GM12878 (cell line): ENCODE measurements at regions of chrX and their contacts with region 1.

Region 1: DNA sequence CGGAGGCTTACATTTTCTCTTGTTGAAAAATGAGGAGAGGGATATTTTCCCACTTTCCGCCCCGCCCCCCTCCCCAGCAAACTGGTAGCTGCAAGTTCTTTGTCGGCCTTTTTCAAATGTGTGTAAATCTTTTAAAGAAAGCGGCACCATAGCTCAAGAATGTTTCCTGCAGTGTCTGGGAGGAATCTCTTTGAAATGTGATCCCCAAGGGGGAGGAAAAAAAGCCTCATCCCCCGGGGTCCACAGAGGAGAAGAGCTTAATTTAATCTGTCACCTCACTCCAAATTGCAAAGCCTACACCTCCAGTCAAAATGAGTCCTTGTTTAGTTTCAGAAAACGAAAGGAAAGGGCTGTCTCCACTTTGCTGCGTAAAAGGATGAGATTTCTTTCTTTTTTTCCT is 34.8 kb downstream of the ASMT start:
- DNase-seq: no peak
- ATAC-seq: no peak
- H3K4me3 ChIP-seq: no peak overlapping the region
- H3K27ac ChIP-seq: no peak overlapping the region
- H3K4me1 ChIP-seq: no peaks in the 10 kb centered on the region
- H3K27me3 ChIP-seq: no peaks in the 10 kb centered on the region
- CTCF ChIP-seq: no peak
- EP300 ChIP-seq: no peak
- POLR2A ChIP-seq: no peak
- RAD21 ChIP-seq: no peak

Region 2: GRCh38 chrX:1462596-1463251 is 186.9 kb before region 1 on chrX:
- CTCF ChIA-PET with region 1: no interaction called
- POLR2A ChIA-PET with region 1: no interaction called
- RAD21 ChIA-PET with region 1: no interaction called
- SMC1A ChIA-PET with region 1: no interaction called
- in situ Hi-C with region 1: loop called (anchors 5 kb)
- intact Hi-C with region 1: no loop called
- DNase-seq: no peak
- ATAC-seq: no peak
- H3K4me3 ChIP-seq: no peak overlapping the region
- H3K27ac ChIP-seq: no peak overlapping the region
- H3K4me1 ChIP-seq: peaks cover 10% of the 10 kb centered on the region
- H3K27me3 ChIP-seq: no peaks in the 10 kb centered on the region
- CTCF ChIP-seq: no peak
- EP300 ChIP-seq: no peak
- POLR2A ChIP-seq: no peak
- RAD21 ChIP-seq: no peak

Region 3: DNA sequence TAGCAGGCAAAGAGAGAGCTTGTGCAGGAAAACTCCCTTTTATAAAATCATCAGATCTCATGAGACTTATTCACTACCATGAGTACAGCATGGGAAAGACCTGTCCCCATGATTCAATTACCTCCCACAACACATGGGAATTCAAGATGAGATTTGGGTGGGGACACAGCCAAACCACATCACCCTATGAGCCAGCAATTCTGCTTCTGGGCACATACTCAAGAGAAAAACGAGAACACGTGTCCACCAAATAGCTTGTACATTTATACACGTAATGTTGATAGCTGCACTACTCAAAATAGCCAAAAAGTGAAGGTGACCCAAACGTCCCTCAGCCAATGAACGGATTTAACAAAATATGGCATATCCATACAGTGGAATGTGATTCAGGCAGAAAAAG is 945.6 kb after region 1 on chrX:
- CTCF ChIA-PET with region 1: no interaction called
- POLR2A ChIA-PET with region 1: no interaction called
- RAD21 ChIA-PET with region 1: no interaction called
- SMC1A ChIA-PET with region 1: no interaction called
- in situ Hi-C with region 1: no loop called
- intact Hi-C with region 1: loop called (anchors 1 kb)
- DNase-seq: no peak
- ATAC-seq: no peak
- H3K4me3 ChIP-seq: no peak overlapping the region
- H3K27ac ChIP-seq: no peak overlapping the region
- H3K4me1 ChIP-seq: no peaks in the 10 kb centered on the region
- H3K27me3 ChIP-seq: no peaks in the 10 kb centered on the region
- CTCF ChIP-seq: no peak
- EP300 ChIP-seq: no peak
- POLR2A ChIP-seq: no peak
- RAD21 ChIP-seq: no peak

Region 4: GRCh38 chrX:2811271-2811670 is 1161.7 kb after region 1 on chrX:
- CTCF ChIA-PET with region 1: no interaction called
- POLR2A ChIA-PET with region 1: no interaction called
- RAD21 ChIA-PET with region 1: no interaction called
- SMC1A ChIA-PET with region 1: no interaction called
- in situ Hi-C with region 1: loop called (anchors 5 kb)
- intact Hi-C with region 1: loop called (anchors 10 kb)
- DNase-seq: no peak
- ATAC-seq: no peak
- H3K4me3 ChIP-seq: no peak overlapping the region
- H3K27ac ChIP-seq: no peak overlapping the region
- H3K4me1 ChIP-seq: no peaks in the 10 kb centered on the region
- H3K27me3 ChIP-seq: no peaks in the 10 kb centered on the region
- CTCF ChIP-seq: no peak
- EP300 ChIP-seq: no peak
- POLR2A ChIP-seq: no peak
- RAD21 ChIP-seq: no peak

Region 5: DNA sequence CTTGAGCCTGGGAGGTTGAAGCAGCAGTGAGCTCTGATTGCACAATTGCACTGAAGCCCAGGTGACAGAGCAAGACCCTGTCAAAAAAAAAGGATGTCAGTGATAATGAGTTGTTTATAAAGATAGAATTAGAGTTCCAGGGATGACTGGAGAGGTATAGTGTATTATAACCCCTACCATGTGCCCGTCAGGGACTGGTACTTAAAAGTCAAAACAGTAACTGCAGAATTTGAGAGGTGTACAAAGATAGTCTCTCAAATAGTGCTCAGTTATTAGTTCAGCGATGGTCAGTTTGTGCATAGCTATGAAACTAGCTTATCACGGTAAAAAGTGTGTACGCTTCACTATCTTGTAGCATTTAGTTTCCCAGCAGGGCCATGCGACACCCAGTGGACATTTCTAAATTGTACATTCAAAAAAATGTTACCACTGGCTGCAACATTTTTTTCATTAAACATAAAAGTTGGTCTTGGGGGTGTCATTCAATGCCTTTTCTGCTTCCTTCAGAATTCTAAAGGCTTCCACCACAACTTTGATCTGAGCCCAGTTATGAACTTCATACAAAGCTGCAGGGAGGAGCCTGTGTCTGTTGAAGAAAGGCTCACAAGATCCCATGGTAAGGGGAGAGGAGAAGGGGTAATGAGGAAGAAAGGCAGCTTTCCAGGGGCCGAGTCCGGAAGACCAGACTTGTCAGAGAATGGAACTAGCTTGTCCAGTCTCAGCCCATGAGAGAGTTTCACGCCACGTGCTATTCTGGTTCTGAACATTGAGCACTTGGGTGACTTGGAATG is 1169.9 kb after region 1 on chrX:
- CTCF ChIA-PET with region 1: no interaction called
- POLR2A ChIA-PET with region 1: no interaction called
- RAD21 ChIA-PET with region 1: no interaction called
- SMC1A ChIA-PET with region 1: no interaction called
- in situ Hi-C with region 1: loop called (anchors 5 kb)
- intact Hi-C with region 1: loop called (anchors 10 kb)
- DNase-seq: no peak
- ATAC-seq: peak; percentile 56
- H3K4me3 ChIP-seq: no peak overlapping the region
- H3K27ac ChIP-seq: no peak overlapping the region
- H3K4me1 ChIP-seq: no peaks in the 10 kb centered on the region
- H3K27me3 ChIP-seq: no peaks in the 10 kb centered on the region; a peak in 1 of 4 replicates
- CTCF ChIP-seq: peak; percentile 22 to 41 (median 38); a peak in 4 of 6 replicates
- EP300 ChIP-seq: no peak
- POLR2A ChIP-seq: no peak
- RAD21 ChIP-seq: peak; percentile 59